CD4-positive, alpha-beta memory T cell (primary cell): ENCODE measurements at regions of chr2 and their contacts with region 1.

Region 1: DNA sequence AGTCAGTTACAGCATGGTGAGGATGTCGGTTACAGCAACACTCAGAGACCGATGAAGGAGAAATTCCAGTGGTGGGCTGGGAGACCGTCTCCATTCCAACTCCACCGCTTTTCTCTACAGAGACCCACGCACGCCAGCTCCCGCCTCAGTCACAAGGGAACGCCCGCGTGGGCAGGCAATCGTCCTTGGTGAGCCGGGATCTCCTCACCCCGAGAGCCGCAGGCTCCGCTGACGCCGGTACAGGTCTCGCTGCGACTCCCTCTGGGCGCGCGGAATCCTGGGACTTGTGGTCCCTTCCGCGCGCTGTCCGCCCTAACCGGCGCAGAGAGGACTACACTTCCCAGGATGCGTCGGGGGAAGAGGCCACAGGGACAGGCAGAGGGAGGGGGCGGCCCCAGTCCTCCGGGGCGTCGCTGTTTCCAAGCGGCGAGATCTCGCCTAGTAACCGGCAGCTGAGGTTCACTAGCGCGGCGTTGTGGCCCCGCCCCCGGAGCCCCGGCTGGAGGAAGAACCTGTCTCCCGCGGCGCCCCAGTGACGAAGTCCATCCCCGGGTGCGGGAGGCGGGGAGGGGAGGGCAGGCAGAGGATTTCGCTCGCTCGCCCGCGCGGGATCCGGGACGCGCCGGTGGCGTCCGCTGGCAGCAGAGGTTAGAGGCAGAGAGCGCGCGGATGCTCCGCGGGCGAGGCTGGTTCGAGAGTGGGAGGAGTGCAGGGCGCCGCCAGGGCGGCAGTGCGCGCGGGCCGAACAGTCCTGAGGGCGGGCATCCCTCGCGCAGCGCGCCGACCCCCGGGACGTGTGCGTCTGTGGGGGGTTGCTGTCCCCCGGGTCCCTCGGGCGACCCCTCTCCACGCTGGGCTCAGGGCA is at the start of gene EML6:
- DNase-seq: peak; percentile 98 to 100 (median 98)
- H3K4me3 ChIP-seq: peak within 1 kb of the TSS; percentile 61 to 79
- H3K4me3 Mint-ChIP-seq: peak within 1 kb of the TSS; percentile 93 to 97 (median 94)
- H3K27ac ChIP-seq: peak within 1 kb of the TSS; percentile 53
- H3K27ac Mint-ChIP-seq: peak within 1 kb of the TSS; percentile 57 to 94 (median 92)
- H3K4me1 ChIP-seq: peaks cover 18% of the 10 kb centered on the region
- H3K4me1 Mint-ChIP-seq: peaks cover 8 to 29% (median 16%) of the 10 kb centered on the region in 4 donors
- H3K27me3 ChIP-seq: peaks cover 15% of the 10 kb centered on the region
- H3K27me3 Mint-ChIP-seq: peaks cover 16 to 25% of the 10 kb centered on the region in 2 donors
- total RNA-seq, gene EML6: 1.8 to 3.9 TPM

Region 2: GRCh38 chr2:53767405-53768241 is 955.7 kb before region 1 on chr2 and contains the start of gene CHAC2:
- CTCF ChIA-PET with region 1: no interaction called
- POLR2A ChIA-PET with region 1: no interaction called
- intact Hi-C with region 1: loop called (anchors 5 kb)
- DNase-seq: peak; percentile 82 to 89 (median 86)
- H3K4me3 ChIP-seq: peak within 1 kb of the TSS; percentile 59 to 61
- H3K4me3 Mint-ChIP-seq: peak within 1 kb of the TSS; percentile 90 to 97 (median 94)
- H3K27ac ChIP-seq: peak within 1 kb of the TSS; percentile 82
- H3K27ac Mint-ChIP-seq: peak within 1 kb of the TSS; percentile 89 to 98 (median 96)
- H3K4me1 ChIP-seq: peaks cover 17% of the 10 kb centered on the region
- H3K4me1 Mint-ChIP-seq: peaks cover 11 to 31% (median 20%) of the 10 kb centered on the region in 4 donors
- H3K27me3 ChIP-seq: no peaks in the 10 kb centered on the region
- H3K27me3 Mint-ChIP-seq: no peaks in the 10 kb centered on the region
- total RNA-seq, gene CHAC2: 1.5 to 1.6 TPM

Region 3: DNA sequence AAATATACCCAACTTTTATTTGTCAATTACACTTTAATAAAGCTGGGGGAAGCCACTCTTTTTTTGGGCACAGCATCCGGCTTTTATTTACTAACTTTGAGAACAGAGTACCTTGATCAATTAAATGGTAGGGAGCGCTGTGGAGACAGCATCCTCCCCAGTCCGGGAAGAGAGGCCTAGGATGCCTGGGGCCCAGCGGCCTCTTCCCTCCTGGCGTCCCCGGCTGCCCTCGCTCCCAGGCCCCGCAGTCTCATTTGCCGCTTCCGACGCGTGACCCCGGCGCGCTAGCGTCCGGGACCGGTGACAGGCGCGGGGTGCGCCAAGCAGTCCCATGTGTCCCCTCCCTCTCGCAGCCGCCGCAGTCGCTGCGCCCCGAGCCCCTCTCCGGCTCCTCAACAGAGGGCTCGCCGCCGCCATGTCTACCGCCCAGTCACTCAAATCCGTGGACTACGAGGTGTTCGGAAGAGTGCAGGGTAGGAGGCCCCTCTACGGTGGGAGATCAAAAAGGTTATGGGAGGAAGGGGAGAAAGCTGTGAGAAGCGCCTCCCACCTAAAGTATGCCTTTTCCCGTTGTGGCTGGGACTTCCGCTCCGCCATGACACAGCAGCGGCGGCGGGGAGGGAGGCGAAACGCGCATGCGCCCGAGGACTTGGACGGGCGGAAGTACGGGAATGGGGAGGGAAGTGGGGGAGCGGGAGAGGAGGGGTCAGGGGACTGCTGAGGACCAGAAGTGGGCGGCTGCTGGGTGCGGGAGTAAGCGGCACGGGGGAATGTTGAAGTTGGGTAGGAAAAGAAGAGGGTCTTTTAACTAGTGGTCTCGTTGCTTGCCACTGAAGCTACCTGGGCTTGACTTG is 607.9 kb before region 1 on chr2 and contains the start of gene ACYP2:
- CTCF ChIA-PET with region 1: no interaction called
- POLR2A ChIA-PET with region 1: no interaction called
- intact Hi-C with region 1: loop called (anchors 5 kb)
- DNase-seq: peak; percentile 89 to 92 (median 89)
- H3K4me3 ChIP-seq: peak within 1 kb of the TSS; percentile 77 to 83
- H3K4me3 Mint-ChIP-seq: peak within 1 kb of the TSS; percentile 94 to 99 (median 97)
- H3K27ac ChIP-seq: peak within 1 kb of the TSS; percentile 93
- H3K27ac Mint-ChIP-seq: peak within 1 kb of the TSS; percentile 99 to 100 (median 99)
- H3K4me1 ChIP-seq: peaks cover 17% of the 10 kb centered on the region
- H3K4me1 Mint-ChIP-seq: peaks cover 12 to 27% (median 16%) of the 10 kb centered on the region in 4 donors
- H3K27me3 ChIP-seq: no peaks in the 10 kb centered on the region
- H3K27me3 Mint-ChIP-seq: no peaks in the 10 kb centered on the region
- total RNA-seq, gene ACYP2: 13.1 to 16.9 TPM

Region 4: GRCh38 chr2:54704688-54705605 is 18.4 kb before region 1 on chr2:
- CTCF ChIA-PET with region 1: interaction called, 13 read pairs
- POLR2A ChIA-PET with region 1: interaction called, 3 read pairs
- intact Hi-C with region 1: no loop called
- DNase-seq: peak in 4 of 5 donors; percentile 56 to 63 (median 56)
- H3K4me3 ChIP-seq: no peak overlapping the region
- H3K4me3 Mint-ChIP-seq: no peak overlapping the region
- H3K27ac ChIP-seq: no peak overlapping the region
- H3K27ac Mint-ChIP-seq: no peak overlapping the region
- H3K4me1 ChIP-seq: peaks cover 10% of the 10 kb centered on the region
- H3K4me1 Mint-ChIP-seq: peaks cover 0 to 4% (median 2%) of the 10 kb centered on the region in 4 donors
- H3K27me3 ChIP-seq: no peaks in the 10 kb centered on the region
- H3K27me3 Mint-ChIP-seq: peaks cover 12 to 13% of the 10 kb centered on the region in 2 donors

Region 5: GRCh38 chr2:54773838-54774237 is 50.5 kb after region 1 on chr2:
- CTCF ChIA-PET with region 1: no interaction called
- POLR2A ChIA-PET with region 1: no interaction called
- intact Hi-C with region 1: no loop called
- DNase-seq: no peak
- H3K4me3 ChIP-seq: no peak overlapping the region
- H3K4me3 Mint-ChIP-seq: no peak overlapping the region
- H3K27ac ChIP-seq: no peak overlapping the region
- H3K27ac Mint-ChIP-seq: peak overlapping the region in 1 of 7 donors; percentile 34
- H3K4me1 ChIP-seq: no peaks in the 10 kb centered on the region
- H3K4me1 Mint-ChIP-seq: no peaks in the 10 kb centered on the region
- H3K27me3 ChIP-seq: no peaks in the 10 kb centered on the region
- H3K27me3 Mint-ChIP-seq: peaks cover 2 to 5% of the 10 kb centered on the region in 2 donors

Region 6: GRCh38 chr2:55232084-55232862 is 508.9 kb after region 1 on chr2 and contains the starts of genes CLHC1 and RPS27A:
- CTCF ChIA-PET with region 1: no interaction called
- POLR2A ChIA-PET with region 1: no interaction called
- intact Hi-C with region 1: loop called (anchors 1 kb)
- DNase-seq: peak; percentile 92 to 96 (median 94)
- H3K4me3 ChIP-seq: peak within 1 kb of the TSS; percentile 82 to 98
- H3K4me3 Mint-ChIP-seq: peak within 1 kb of the TSS; percentile 92 to 100 (median 100)
- H3K27ac ChIP-seq: peak within 1 kb of the TSS; percentile 97
- H3K27ac Mint-ChIP-seq: peak within 1 kb of the TSS; percentile 94 to 100 (median 98)
- H3K4me1 ChIP-seq: peaks cover 52% of the 10 kb centered on the region
- H3K4me1 Mint-ChIP-seq: peaks cover 46 to 75% (median 62%) of the 10 kb centered on the region in 4 donors
- H3K27me3 ChIP-seq: no peaks in the 10 kb centered on the region
- H3K27me3 Mint-ChIP-seq: no peaks in the 10 kb centered on the region
- total RNA-seq, gene CLHC1: 12.4 to 14.2 TPM
- total RNA-seq, gene RPS27A: 2,280 to 2,392 TPM

Region 7: GRCh38 chr2:55311444-55311870 is 588.1 kb after region 1 on chr2:
- CTCF ChIA-PET with region 1: no interaction called
- POLR2A ChIA-PET with region 1: no interaction called
- intact Hi-C with region 1: no loop called
- DNase-seq: no peak
- H3K4me3 ChIP-seq: no peak overlapping the region
- H3K4me3 Mint-ChIP-seq: no peak overlapping the region
- H3K27ac ChIP-seq: no peak overlapping the region
- H3K27ac Mint-ChIP-seq: no peak overlapping the region
- H3K4me1 ChIP-seq: no peaks in the 10 kb centered on the region
- H3K4me1 Mint-ChIP-seq: peaks cover 0 to 2% (median 0%) of the 10 kb centered on the region in 4 donors
- H3K27me3 ChIP-seq: no peaks in the 10 kb centered on the region
- H3K27me3 Mint-ChIP-seq: no peaks in the 10 kb centered on the region

Region 8: GRCh38 chr2:55617175-55618024 is 894.0 kb after region 1 on chr2 and contains the start of gene PPP4R3B:
- CTCF ChIA-PET with region 1: no interaction called
- POLR2A ChIA-PET with region 1: no interaction called
- intact Hi-C with region 1: loop called (anchors 2 kb)
- DNase-seq: peak; percentile 99 to 100 (median 100)
- H3K4me3 ChIP-seq: peak within 1 kb of the TSS; percentile 97 to 98
- H3K4me3 Mint-ChIP-seq: no peak within 1 kb of the TSS
- H3K27ac ChIP-seq: peak within 1 kb of the TSS; percentile 100
- H3K27ac Mint-ChIP-seq: no peak within 1 kb of the TSS
- H3K4me1 ChIP-seq: peaks cover 64% of the 10 kb centered on the region
- H3K4me1 Mint-ChIP-seq: peaks cover 23 to 44% (median 40%) of the 10 kb centered on the region in 4 donors
- H3K27me3 ChIP-seq: no peaks in the 10 kb centered on the region
- H3K27me3 Mint-ChIP-seq: no peaks in the 10 kb centered on the region
- total RNA-seq, gene PPP4R3B: 111 to 114 TPM